ENCODE measurements at regions of chr7 and their contacts with region 1.

Region 1: GRCh38 chr7:137898839-137899721 is 52.3 kb upstream of the DGKI start:
- DNase-seq: peak; percentile 69 to 85
- ATAC-seq: peak; percentile 88 to 97 (median 95)
- H3K4me3 ChIP-seq: no peak overlapping the region
- H3K4me3 Mint-ChIP-seq: peak overlapping the region; percentile 40
- H3K27ac ChIP-seq: peak overlapping the region; percentile 0
- H3K27ac Mint-ChIP-seq: peak overlapping the region; percentile 69 to 85
- H3K4me1 ChIP-seq: peaks cover 12% of the 10 kb centered on the region
- H3K4me1 Mint-ChIP-seq: peaks cover 10 to 19% of the 10 kb centered on the region in 2 donors
- H3K27me3 ChIP-seq: no peaks in the 10 kb centered on the region
- H3K27me3 Mint-ChIP-seq: no peaks in the 10 kb centered on the region
- CTCF ChIP-seq: peak; percentile 88

Region 2: GRCh38 chr7:137606061-137606674 is 292.9 kb before region 1 on chr7:
- intact Hi-C with region 1: loop called (anchors 5 kb)
- DNase-seq: peak in 1 of 2 donors; percentile 33
- ATAC-seq: no peak
- H3K4me3 ChIP-seq: no peak overlapping the region
- H3K4me3 Mint-ChIP-seq: no peak overlapping the region
- H3K27ac ChIP-seq: no peak overlapping the region
- H3K27ac Mint-ChIP-seq: no peak overlapping the region
- H3K4me1 ChIP-seq: no peaks in the 10 kb centered on the region
- H3K4me1 Mint-ChIP-seq: no peaks in the 10 kb centered on the region
- H3K27me3 ChIP-seq: no peaks in the 10 kb centered on the region
- H3K27me3 Mint-ChIP-seq: peaks cover 0 to 6% of the 10 kb centered on the region in 2 donors
- CTCF ChIP-seq: peak; percentile 31

Region 3: GRCh38 chr7:137656227-137656849 is 242.7 kb before region 1 on chr7:
- intact Hi-C with region 1: loop called (anchors 2 kb)
- DNase-seq: peak; percentile 29 to 61
- ATAC-seq: peak in 1 of 3 donors; percentile 38
- H3K4me3 ChIP-seq: no peak overlapping the region
- H3K4me3 Mint-ChIP-seq: no peak overlapping the region
- H3K27ac ChIP-seq: no peak overlapping the region
- H3K27ac Mint-ChIP-seq: no peak overlapping the region
- H3K4me1 ChIP-seq: no peaks in the 10 kb centered on the region
- H3K4me1 Mint-ChIP-seq: no peaks in the 10 kb centered on the region
- H3K27me3 ChIP-seq: no peaks in the 10 kb centered on the region
- H3K27me3 Mint-ChIP-seq: no peaks in the 10 kb centered on the region
- CTCF ChIP-seq: peak; percentile 65

Region 4: DNA sequence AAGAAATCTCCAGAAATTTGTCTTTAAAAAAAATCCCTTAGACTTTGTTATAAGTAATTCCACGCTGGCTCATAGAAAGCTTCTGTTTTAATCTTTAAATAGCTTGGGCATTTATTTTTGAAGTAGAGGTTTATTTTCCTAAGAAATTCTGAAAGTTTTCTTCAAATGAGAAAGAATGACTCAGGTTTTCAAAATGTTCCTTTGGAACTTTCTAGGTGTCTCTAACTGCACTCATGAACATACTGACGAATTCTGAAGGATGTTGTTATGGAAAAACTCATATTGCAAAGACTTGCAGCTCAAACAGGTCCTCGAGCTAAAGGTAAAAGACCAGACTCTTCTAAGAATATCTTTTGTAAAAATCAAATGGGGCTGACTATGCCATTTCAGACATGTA is 63.0 kb before region 1 on chr7:
- intact Hi-C with region 1: no loop called
- DNase-seq: no peak
- ATAC-seq: no peak
- H3K4me3 ChIP-seq: no peak overlapping the region
- H3K4me3 Mint-ChIP-seq: no peak overlapping the region
- H3K27ac ChIP-seq: no peak overlapping the region
- H3K27ac Mint-ChIP-seq: no peak overlapping the region
- H3K4me1 ChIP-seq: no peaks in the 10 kb centered on the region
- H3K4me1 Mint-ChIP-seq: no peaks in the 10 kb centered on the region
- H3K27me3 ChIP-seq: no peaks in the 10 kb centered on the region
- H3K27me3 Mint-ChIP-seq: peaks cover 18 to 41% of the 10 kb centered on the region in 2 donors
- CTCF ChIP-seq: no peak

Region 5: GRCh38 chr7:138008547-138009349 is 109.7 kb after region 1 on chr7:
- intact Hi-C with region 1: loop called (anchors 1 kb)
- DNase-seq: peak; percentile 20 to 77
- ATAC-seq: peak; percentile 75 to 91 (median 76)
- H3K4me3 ChIP-seq: no peak overlapping the region
- H3K4me3 Mint-ChIP-seq: no peak overlapping the region
- H3K27ac ChIP-seq: no peak overlapping the region
- H3K27ac Mint-ChIP-seq: peak overlapping the region in 1 of 2 donors; percentile 25
- H3K4me1 ChIP-seq: peaks cover 3% of the 10 kb centered on the region
- H3K4me1 Mint-ChIP-seq: peaks cover 0 to 5% of the 10 kb centered on the region in 2 donors
- H3K27me3 ChIP-seq: no peaks in the 10 kb centered on the region
- H3K27me3 Mint-ChIP-seq: no peaks in the 10 kb centered on the region
- CTCF ChIP-seq: peak; percentile 82

Region 6: DNA sequence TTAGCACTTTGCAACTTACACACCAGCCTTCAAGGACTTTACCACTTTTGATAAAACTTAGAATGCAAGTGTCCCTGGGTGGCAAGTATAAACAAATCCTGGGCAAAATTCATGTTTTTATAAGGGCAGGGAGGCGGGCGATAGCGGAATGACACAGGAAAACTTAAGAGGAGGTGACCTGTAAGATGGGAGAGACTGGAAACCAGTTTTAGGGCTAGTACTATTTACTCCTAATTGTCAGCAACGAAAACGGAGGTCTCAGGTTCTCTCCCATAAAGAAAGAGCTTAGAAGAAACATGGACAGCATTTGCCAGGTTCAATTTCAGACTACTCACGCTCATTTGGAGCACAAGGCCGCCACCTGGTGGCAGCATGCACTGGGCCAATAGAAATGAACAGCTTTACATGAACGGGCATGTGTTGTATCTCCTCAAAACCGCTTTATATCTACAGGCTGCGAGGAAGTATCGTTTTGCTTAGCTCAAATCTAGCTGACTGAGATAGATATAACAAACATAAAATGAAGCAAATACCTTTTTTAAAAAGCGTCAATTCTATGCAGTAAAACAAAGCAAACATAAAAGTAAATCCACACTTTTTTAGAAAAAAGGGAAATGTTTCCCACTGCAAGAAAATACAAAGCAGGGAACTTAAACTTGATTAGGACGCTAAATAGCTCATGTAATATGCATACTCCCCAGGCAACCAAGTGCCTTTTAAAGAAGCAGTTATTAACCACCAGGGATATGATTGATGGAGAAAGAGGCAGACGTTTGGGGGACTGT is 839.7 kb after region 1 on chr7:
- intact Hi-C with region 1: loop called (anchors 1 kb)
- DNase-seq: peak; percentile 71 to 91
- ATAC-seq: peak; percentile 75 to 95 (median 90)
- H3K4me3 ChIP-seq: no peak overlapping the region
- H3K4me3 Mint-ChIP-seq: no peak overlapping the region
- H3K27ac ChIP-seq: no peak overlapping the region
- H3K27ac Mint-ChIP-seq: no peak overlapping the region
- H3K4me1 ChIP-seq: no peaks in the 10 kb centered on the region
- H3K4me1 Mint-ChIP-seq: peaks cover 5 to 7% of the 10 kb centered on the region in 2 donors
- H3K27me3 ChIP-seq: no peaks in the 10 kb centered on the region
- H3K27me3 Mint-ChIP-seq: peaks cover 0 to 11% of the 10 kb centered on the region in 2 donors
- CTCF ChIP-seq: peak; percentile 90

Measured in natural killer cell (primary cell).